ENCODE measurements at regions of chrX and their contacts with region 1.

Region 1: DNA sequence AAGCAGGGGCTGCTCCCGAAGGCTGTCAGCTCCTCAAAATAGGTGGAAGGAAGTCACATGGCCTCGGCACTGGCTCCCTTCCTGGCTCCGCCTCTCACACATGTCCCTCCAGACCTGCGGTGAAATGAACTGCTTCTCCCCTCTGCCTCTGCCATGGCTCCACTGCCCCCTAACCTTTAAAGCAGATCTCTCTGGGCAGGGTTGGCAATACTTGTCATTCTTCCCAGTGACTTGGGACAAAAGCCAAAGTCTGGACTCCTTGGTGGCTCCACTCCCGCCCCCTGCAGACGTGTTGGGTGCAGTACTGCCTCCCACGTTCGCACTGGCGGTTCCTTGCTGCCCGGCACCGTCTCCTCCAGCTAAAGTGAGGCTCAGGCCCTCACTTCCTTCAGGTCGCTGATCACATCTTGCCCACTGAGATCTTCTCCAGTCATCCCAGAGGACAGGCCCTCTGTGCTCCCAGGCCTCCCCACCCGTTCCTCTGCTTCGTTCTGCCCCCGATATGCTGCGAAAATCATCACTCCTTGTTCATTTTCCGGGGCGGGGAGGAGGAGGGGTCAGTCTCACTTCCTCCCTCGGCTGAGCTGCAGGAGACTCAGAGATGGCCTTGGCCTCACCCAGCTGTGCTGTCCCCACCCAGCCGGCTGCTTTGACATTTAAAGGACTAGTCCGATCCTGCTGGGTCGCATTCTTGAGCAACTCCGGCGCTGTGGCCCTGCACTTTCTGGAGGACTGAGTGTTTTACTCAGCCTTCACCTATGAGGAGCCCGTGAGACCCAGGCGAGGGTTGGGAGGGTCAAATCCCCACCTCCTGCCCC is 97.4 kb downstream of the PHKA2 start:
- DNase-seq: peak; percentile 78
- H3K4me3 ChIP-seq: no peak overlapping the region
- H3K27ac ChIP-seq: no peak overlapping the region
- H3K4me1 ChIP-seq: peaks cover 31% of the 10 kb centered on the region
- H3K27me3 ChIP-seq: no peaks in the 10 kb centered on the region
- CTCF ChIP-seq: peak; percentile 65

Region 2: DNA sequence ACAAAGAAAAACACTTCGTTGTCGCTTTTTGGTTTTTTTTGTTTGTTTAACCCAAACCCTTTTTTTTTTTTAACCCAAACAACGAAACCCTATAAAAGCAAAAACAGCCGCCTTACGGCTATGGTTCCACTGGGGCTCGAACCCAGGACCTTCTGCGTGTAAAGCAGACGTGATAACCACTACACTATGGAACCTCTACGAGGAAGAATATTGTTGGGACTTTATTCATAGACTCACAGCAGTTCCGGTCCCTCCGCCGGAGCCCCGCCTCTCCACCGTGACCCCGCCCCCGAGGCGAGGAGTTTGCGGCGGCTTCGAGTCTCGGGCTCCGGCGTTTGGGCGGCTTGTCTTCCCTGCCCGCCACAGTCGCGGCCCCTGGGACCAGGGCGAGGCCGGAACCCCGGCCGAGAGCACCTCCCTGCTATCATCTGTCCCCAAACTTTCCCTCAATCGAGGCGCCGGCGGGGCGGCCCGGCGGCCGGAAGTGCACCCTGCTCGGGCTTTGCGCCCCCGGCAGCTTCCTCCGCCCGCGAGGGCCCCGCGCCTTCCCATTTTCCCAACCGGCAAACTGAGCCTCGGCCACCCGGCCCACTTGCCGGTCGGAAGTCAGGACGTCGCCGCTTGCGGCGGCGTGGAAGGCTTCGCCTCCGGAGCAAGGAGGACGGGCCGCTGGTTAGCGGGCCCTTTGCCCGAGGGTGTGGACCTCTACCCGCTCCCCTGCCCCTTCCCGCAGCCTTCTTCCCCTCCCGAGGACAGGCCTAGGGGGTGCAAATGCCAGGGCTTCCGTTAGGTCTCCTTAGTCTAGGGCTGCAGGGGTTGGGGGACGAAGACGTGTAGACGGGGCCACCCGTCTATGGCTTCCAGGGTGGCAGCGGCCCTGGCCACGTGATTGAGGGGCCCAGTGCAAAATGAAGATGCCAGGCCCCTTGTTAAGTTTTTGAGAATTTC is 211.5 kb before region 1 on chrX:
- CTCF ChIA-PET with region 1: no interaction called
- POLR2A ChIA-PET with region 1: no interaction called
- intact Hi-C with region 1: loop called (anchors 10 kb)
- DNase-seq: peak; percentile 77
- H3K4me3 ChIP-seq: peak overlapping the region; percentile 65
- H3K27ac ChIP-seq: peak overlapping the region; percentile 87
- H3K4me1 ChIP-seq: no peaks in the 10 kb centered on the region
- H3K27me3 ChIP-seq: no peaks in the 10 kb centered on the region
- CTCF ChIP-seq: no peak

Region 3: GRCh38 chrX:18687856-18688495 is 198.6 kb before region 1 on chrX:
- CTCF ChIA-PET with region 1: no interaction called
- POLR2A ChIA-PET with region 1: no interaction called
- intact Hi-C with region 1: no loop called
- DNase-seq: no peak
- H3K4me3 ChIP-seq: no peak overlapping the region
- H3K27ac ChIP-seq: no peak overlapping the region
- H3K4me1 ChIP-seq: no peaks in the 10 kb centered on the region
- H3K27me3 ChIP-seq: peaks cover 6% of the 10 kb centered on the region
- CTCF ChIP-seq: no peak